ENCODE measurements at regions of chr4 and their contacts with region 1.

Region 1: DNA sequence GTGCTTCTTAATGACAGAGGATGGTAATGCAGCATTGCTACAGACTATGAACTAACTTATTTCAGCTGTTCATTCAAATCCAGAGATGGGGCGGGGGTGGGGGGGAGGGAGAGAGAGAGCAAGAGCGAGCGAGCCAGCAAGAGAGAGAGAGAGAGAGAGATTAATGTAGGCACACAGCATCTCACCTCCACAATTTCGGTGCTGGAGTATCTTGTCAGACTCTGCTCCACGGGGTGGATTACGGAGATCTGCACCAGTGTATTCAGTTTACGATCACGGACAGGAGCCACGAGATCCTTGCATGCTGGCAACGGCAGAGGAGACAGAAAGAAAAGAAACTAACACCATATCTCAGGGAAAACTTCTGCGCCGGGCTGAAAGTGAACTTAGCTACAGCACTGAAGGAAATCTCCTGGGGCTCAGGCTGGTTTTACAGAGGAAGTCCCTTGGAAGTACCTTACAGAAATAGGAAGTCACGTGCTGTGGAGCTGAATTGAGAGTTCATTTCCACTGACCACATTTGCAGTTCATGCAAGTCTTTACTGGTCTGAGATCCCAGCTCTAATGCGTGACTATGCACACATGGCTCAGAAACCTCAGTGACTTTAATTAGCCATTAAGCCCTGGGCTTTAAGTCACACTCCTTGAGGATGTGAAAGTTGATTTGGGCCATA is 440.9 kb downstream of the INPP4B start:
- DNase-seq: peak; percentile 96
- H3K4me3 ChIP-seq: peak overlapping the region; percentile 69 to 99 (median 79)
- H3K27ac ChIP-seq: peak overlapping the region; percentile 100
- H3K4me1 ChIP-seq: peaks cover 45% of the 10 kb centered on the region
- H3K27me3 ChIP-seq: no peaks in the 10 kb centered on the region
- CTCF ChIP-seq: no peak

Region 2: DNA sequence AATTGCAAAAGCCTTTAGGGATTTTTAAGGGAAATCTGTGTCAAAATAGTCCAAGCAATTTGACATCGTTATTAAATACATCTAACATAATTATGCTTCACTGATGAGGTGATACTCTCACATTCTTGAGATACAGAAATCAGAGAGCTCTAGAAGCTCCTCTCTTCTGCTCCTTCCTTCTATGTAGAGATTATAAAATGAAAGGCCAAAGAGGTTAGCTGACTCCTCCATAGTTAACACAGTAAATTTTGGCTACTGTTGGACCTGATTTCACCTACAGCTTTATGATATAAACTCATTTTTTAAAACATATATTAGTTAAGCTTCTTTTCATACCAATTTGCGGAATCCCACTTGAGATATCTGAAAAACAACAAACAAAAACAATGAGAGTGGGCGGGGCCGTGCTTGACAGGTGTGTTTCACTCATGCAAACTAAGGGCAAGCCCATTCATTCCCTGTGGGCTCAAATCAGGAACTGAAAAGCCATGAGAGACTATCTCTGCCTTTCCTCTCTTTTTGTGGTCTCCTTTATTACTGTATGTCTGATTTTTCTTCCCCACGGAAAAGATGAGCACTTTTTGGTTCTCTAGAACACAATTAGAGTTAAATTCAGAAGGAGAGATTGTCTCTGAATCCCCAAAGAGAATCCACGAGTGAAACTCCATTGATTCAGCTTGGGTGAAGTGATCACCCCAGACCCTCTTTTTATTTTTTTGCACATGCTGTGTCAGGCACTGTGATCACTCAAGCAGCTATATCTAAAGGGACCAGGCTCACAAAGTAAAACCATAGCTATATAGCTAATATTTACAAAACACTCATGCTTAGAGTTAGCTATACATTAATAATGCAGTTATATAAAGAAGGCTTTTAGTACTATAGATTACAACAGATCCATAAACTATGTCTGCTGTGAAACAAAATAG is 202.5 kb before region 1 on chr4:
- CTCF ChIA-PET with region 1: no interaction called
- dilution Hi-C with region 1: no loop called
- in situ Hi-C with region 1: no loop called
- intact Hi-C with region 1: loop called (anchors 10 kb)
- DNase-seq: no peak
- H3K4me3 ChIP-seq: no peak overlapping the region
- H3K27ac ChIP-seq: no peak overlapping the region
- H3K4me1 ChIP-seq: no peaks in the 10 kb centered on the region
- H3K27me3 ChIP-seq: no peaks in the 10 kb centered on the region
- CTCF ChIP-seq: no peak

Region 3: GRCh38 chr4:142297313-142297712 is 107.8 kb before region 1 on chr4:
- CTCF ChIA-PET with region 1: no interaction called
- dilution Hi-C with region 1: no loop called
- in situ Hi-C with region 1: no loop called
- intact Hi-C with region 1: no loop called
- DNase-seq: no peak
- H3K4me3 ChIP-seq: no peak overlapping the region
- H3K27ac ChIP-seq: no peak overlapping the region
- H3K4me1 ChIP-seq: no peaks in the 10 kb centered on the region
- H3K27me3 ChIP-seq: no peaks in the 10 kb centered on the region
- CTCF ChIP-seq: no peak

Region 4: DNA sequence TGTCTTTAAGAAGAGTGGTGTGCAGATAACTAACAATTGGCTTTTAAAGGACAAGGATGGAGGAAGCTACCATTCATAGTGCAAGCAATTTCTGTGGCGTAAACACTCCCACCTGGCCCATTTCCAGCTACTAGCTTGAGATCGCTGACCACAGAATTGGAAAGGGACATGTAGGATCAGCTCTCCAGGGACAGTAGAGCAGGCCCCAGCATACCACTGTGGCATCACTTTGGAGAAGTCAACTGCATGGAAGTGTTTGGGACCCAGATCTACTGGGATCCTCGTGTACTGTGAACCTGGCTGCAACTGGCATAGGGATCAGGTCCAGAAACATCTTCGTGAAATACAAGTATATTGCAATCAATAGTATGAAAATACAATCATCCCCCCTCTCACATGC is 74.0 kb before region 1 on chr4:
- CTCF ChIA-PET with region 1: no interaction called
- dilution Hi-C with region 1: no loop called
- in situ Hi-C with region 1: no loop called
- intact Hi-C with region 1: no loop called
- DNase-seq: no peak
- H3K4me3 ChIP-seq: no peak overlapping the region
- H3K27ac ChIP-seq: no peak overlapping the region
- H3K4me1 ChIP-seq: peaks cover under 1% of the 10 kb centered on the region
- H3K27me3 ChIP-seq: no peaks in the 10 kb centered on the region
- CTCF ChIP-seq: no peak

Region 5: GRCh38 chr4:142379277-142380057 is 25.7 kb before region 1 on chr4:
- CTCF ChIA-PET with region 1: no interaction called
- dilution Hi-C with region 1: no loop called
- in situ Hi-C with region 1: no loop called
- intact Hi-C with region 1: loop called (anchors 2 kb)
- DNase-seq: peak; percentile 69
- H3K4me3 ChIP-seq: no peak overlapping the region
- H3K27ac ChIP-seq: peak overlapping the region; percentile 83
- H3K4me1 ChIP-seq: peaks cover 39% of the 10 kb centered on the region
- H3K27me3 ChIP-seq: no peaks in the 10 kb centered on the region
- CTCF ChIP-seq: no peak

Region 6: DNA sequence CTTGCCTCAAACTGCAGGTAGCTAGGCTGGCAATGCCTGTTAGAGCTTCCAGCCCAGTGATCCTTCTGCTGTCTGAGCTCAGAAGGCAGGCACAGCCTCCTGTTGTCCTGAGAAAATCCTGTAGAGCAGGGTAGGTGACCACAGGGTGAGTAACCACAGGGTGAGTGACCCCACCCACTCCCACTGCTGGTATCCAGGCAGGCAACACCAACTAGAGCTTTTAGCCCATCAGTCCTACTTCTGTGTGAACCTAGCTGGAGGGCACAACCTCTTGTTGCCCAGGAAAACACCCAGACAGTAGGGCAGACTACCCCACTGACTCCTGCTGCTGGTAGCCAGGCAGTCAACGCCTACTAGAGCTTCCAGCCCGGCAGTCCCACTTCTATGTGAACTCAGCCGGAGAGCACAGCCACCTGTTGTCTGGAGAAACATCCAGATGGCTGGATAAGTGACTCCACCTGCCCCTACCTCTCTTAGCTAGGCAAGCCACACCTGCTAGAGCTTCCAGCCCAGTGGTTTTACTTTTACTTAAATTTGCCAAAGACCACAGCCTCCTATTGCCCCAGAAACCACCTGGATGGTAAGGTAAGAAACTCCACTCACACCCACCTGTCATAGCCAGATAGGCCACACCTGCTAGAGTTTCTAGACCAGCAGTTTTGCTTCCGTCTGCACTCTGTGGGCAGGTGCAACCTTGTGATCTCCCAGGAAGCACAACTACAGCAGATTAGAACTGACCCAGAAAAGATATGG is 69.4 kb after region 1 on chr4:
- CTCF ChIA-PET with region 1: no interaction called
- dilution Hi-C with region 1: no loop called
- in situ Hi-C with region 1: no loop called
- intact Hi-C with region 1: loop called (anchors 2 kb)
- DNase-seq: peak; percentile 95
- H3K4me3 ChIP-seq: no peak overlapping the region
- H3K27ac ChIP-seq: peak overlapping the region; percentile 20
- H3K4me1 ChIP-seq: peaks cover 29% of the 10 kb centered on the region
- H3K27me3 ChIP-seq: no peaks in the 10 kb centered on the region
- CTCF ChIP-seq: no peak

Region 7: DNA sequence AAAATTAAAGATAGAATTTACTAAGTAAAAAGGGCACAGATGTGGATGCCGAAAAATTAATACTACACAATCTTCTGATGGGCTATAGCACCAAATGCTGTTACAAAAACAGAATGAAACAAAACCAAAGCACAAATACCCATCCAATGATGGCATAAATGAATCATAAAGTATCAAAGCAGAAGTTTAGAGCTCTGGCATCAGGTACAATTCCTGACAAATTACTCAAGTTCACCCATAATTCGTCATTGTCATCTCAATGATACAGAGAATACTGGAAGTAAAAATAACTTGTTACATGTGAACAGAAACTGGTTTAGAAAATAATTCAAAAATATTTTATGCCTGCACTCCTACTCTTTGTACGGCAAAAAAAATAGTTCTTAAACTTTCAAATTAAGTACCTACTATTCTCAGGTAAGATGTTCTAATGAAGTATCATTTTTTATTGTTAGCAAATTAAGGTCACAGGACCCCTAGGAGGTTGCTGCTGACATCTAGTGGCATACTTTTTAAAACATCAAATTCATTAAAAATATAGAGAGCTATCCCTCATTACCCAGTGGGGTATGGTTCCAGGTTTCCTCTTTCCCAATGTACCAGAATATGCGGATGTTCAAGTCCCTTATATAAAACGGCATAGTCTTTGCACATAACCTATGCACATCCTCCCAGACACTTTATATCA is 314.8 kb after region 1 on chr4:
- CTCF ChIA-PET with region 1: no interaction called
- dilution Hi-C with region 1: no loop called
- in situ Hi-C with region 1: no loop called
- intact Hi-C with region 1: loop called (anchors 1 kb)
- DNase-seq: peak; percentile 84
- H3K4me3 ChIP-seq: peak overlapping the region in 1 of 3 experiments; percentile 15
- H3K27ac ChIP-seq: peak overlapping the region; percentile 84
- H3K4me1 ChIP-seq: peaks cover 19% of the 10 kb centered on the region
- H3K27me3 ChIP-seq: no peaks in the 10 kb centered on the region
- CTCF ChIP-seq: peak; percentile 49 to 59